Activated CD8-positive, alpha-beta memory T cell treated with anti-CD3 and anti-CD28 coated beads, Interleukin-2, amount 10 ng/mL, durations not matched to agents 7 days and 5 days (primary cell): ENCODE measurements at regions of chr1 and their contacts with region 1.

Region 1: DNA sequence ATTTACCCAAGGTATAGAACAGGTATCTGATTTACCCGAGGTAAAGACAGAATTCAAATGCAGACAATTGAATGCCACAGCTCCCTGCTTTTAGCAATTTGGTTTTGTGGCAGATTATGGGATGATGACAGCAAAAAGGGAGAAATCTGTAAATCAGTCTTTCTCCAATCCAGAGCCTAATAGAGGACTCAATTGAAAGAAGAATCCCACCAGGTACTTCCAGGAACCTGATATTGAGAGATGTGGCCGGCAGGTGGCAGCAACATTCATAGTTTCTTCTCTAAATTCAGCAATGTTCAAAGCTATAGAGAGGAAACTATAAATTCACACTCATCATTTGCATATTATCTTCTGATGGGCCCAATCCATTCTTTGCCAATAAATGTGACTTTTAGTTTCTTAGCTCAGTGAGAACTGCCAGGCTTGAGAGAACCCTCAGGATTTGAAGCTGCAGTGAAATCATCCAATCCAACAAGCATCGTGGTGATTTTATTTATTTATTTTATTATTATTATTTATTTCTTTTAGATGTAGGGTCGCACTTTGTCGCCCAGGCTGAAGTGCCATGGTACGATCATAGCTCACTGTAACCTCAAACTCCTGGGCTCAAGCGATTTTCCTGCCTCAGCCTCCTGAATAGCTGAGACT is 9.8 kb upstream of the PHACTR4 start:
- DNase-seq: peak; percentile 85
- ATAC-seq: peak; percentile 74
- H3K4me3 Mint-ChIP-seq: no peak overlapping the region
- H3K27ac Mint-ChIP-seq: no peak overlapping the region
- H3K4me1 Mint-ChIP-seq: peaks cover 10% of the 10 kb centered on the region
- H3K27me3 Mint-ChIP-seq: peaks cover 3% of the 10 kb centered on the region

Region 2: GRCh38 chr1:28027238-28027637 is 332.5 kb before region 1 on chr1:
- CTCF ChIA-PET with region 1: no interaction called
- DNase-seq: no peak
- ATAC-seq: no peak
- H3K4me3 Mint-ChIP-seq: no peak overlapping the region
- H3K27ac Mint-ChIP-seq: no peak overlapping the region
- H3K4me1 Mint-ChIP-seq: peaks cover 10% of the 10 kb centered on the region
- H3K27me3 Mint-ChIP-seq: no peaks in the 10 kb centered on the region

Region 3: GRCh38 chr1:28329395-28330153 is 30.1 kb before region 1 on chr1:
- CTCF ChIA-PET with region 1: interaction called, 10 read pairs
- DNase-seq: no peak
- ATAC-seq: peak; percentile 15
- H3K4me3 Mint-ChIP-seq: peak overlapping the region; percentile 89
- H3K27ac Mint-ChIP-seq: peak overlapping the region; percentile 99
- H3K4me1 Mint-ChIP-seq: peaks cover 41% of the 10 kb centered on the region
- H3K27me3 Mint-ChIP-seq: no peaks in the 10 kb centered on the region